Heart left ventricle (tissue), 16 donors: ENCODE measurements at regions of chr12 and their contacts with region 1.

Region 1: GRCh38 chr12:19129486-19130223 is at the start of gene PLEKHA5:
- DNase-seq: peak; percentile 77 to 88 (median 79)
- ATAC-seq: peak; percentile 43 to 94 (median 86)
- H3K4me3 ChIP-seq: peak within 1 kb of the TSS; percentile 70 to 96 (median 92)
- H3K27ac ChIP-seq: peak within 1 kb of the TSS; percentile 87 to 96 (median 94)
- H3K4me1 ChIP-seq: peaks cover 0 to 16% (median 0%) of the 10 kb centered on the region in 12 donors
- H3K27me3 ChIP-seq: no peaks in the 10 kb centered on the region
- CTCF ChIP-seq: peak in 8 of 12 donors; percentile 8 to 45 (median 26)
- POLR2A ChIP-seq: peak in 1 of 2 donors; percentile 30
- total RNA-seq, gene PLEKHA5: 43.7 to 72.2 (median 58.7) TPM

Region 2: GRCh38 chr12:18861287-18861858 is 268.3 kb before region 1 on chr12:
- intact Hi-C with region 1: loop called in 2 of 10 experiments (anchors 5 to 10 kb)
- DNase-seq: no peak
- ATAC-seq: no peak
- H3K4me3 ChIP-seq: no peak overlapping the region
- H3K27ac ChIP-seq: no peak overlapping the region
- H3K4me1 ChIP-seq: peaks cover 0 to 7% (median 0%) of the 10 kb centered on the region in 12 donors
- H3K27me3 ChIP-seq: no peaks in the 10 kb centered on the region
- CTCF ChIP-seq: peak; percentile 29 to 57 (median 48)
- POLR2A ChIP-seq: no peak

Region 3: DNA sequence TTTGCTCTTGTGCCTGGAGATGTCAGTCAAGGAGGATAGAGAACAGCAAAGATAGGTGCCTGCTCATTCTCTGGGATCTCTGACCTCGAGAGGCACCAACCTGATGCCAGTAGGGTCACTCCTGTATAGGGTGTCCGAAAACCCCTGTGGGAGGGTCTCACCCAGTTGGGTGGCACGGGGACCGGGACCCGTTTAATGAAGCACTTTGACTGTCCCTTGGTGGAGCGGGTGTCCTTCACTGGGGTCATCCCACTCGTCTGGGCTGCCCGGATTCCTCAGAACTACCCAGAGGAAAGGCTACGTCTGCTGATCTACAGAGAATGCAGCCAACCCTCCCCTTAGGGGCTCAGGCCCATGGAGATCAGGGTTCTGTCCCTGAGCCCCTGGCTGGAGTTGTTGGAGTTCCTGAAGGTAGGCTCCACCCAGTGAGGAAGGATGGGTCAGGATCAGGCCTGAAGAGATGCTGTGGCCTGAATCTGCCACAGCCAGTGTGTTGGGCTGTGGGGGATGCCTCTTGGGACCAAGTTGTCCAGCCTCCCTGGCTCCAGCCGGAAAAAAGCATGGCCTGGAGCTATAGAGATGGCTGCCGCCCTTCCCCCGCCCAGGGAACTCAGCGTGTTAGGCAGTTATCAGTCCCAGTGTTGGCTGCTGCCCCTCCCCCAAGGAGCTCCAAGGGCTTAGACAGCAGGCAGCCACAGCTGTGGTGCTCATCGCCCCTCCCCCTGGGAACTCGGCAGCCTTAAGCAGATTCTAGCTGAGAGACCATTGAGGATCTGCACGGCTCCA is 233.9 kb before region 1 on chr12:
- intact Hi-C with region 1: no loop called
- DNase-seq: peak; percentile 63 to 89 (median 73)
- ATAC-seq: peak in 2 of 4 donors; percentile 36 to 56
- H3K4me3 ChIP-seq: no peak overlapping the region
- H3K27ac ChIP-seq: no peak overlapping the region
- H3K4me1 ChIP-seq: peaks cover 0 to 5% (median 0%) of the 10 kb centered on the region in 12 donors
- H3K27me3 ChIP-seq: no peaks in the 10 kb centered on the region
- CTCF ChIP-seq: no peak
- POLR2A ChIP-seq: no peak

Region 4: GRCh38 chr12:19031032-19031431 is 98.6 kb before region 1 on chr12:
- intact Hi-C with region 1: loop called in 2 of 10 experiments (anchors 5 kb)
- DNase-seq: no peak
- ATAC-seq: peak; percentile 16 to 61 (median 60)
- H3K4me3 ChIP-seq: no peak overlapping the region
- H3K27ac ChIP-seq: peak overlapping the region in 2 of 12 donors; percentile 11 to 25
- H3K4me1 ChIP-seq: peaks cover 0 to 21% (median 5%) of the 10 kb centered on the region in 12 donors
- H3K27me3 ChIP-seq: no peaks in the 10 kb centered on the region
- CTCF ChIP-seq: no peak
- POLR2A ChIP-seq: no peak

Region 5: GRCh38 chr12:19181666-19182426 is 52.2 kb after region 1 on chr12:
- intact Hi-C with region 1: loop called in 8 of 10 experiments (anchors 2 to 10 kb)
- DNase-seq: no peak
- ATAC-seq: no peak
- H3K4me3 ChIP-seq: no peak overlapping the region
- H3K27ac ChIP-seq: peak overlapping the region in 9 of 12 donors; percentile 1 to 64 (median 53)
- H3K4me1 ChIP-seq: peaks cover 0 to 49% (median 20%) of the 10 kb centered on the region in 12 donors
- H3K27me3 ChIP-seq: no peaks in the 10 kb centered on the region
- CTCF ChIP-seq: peak in 5 of 12 donors; percentile 10 to 26 (median 13)
- POLR2A ChIP-seq: no peak